Caco-2 (cell line): ENCODE measurements at regions of chr3 and their contacts with region 1.

Region 1: DNA sequence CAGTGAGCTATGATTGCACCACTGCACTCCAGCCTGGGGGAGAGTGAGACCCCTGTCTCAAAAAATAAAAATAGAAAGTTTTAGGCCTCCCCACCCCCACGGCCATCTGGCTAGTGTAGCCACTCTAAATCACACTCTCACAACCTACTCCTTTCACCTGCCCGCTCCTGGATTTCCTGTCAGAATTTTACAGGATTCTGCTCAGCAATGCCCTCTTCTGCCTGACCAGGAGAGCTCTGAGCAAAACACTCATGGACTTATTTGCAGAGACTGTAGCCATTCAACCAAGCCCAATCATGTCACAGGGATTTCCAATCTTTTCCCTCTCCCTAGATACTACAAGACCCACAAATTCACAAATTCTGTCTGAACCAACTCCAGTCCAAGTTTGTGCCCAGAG is 242.6 kb upstream of the TPRG1 start:
- DNase-seq: peak; percentile 50 to 54
- H3K4me3 ChIP-seq: no peak overlapping the region
- H3K4me3 Mint-ChIP-seq: no peak overlapping the region
- H3K27ac Mint-ChIP-seq: peak overlapping the region; percentile 79
- H3K4me1 ChIP-seq: peaks cover 14% of the 10 kb centered on the region; the same call in 1 of the 2 replicates
- H3K4me1 Mint-ChIP-seq: peaks cover 8% of the 10 kb centered on the region
- H3K27me3 ChIP-seq: no peaks in the 10 kb centered on the region
- H3K27me3 Mint-ChIP-seq: no peaks in the 10 kb centered on the region
- CTCF ChIP-seq: peak in 1 of 2 experiments; percentile 37

Region 2: GRCh38 chr3:188673646-188674186 is 255.4 kb before region 1 on chr3:
- CTCF ChIA-PET with region 1: no interaction called
- POLR2A ChIA-PET with region 1: no interaction called
- intact Hi-C with region 1: loop called (anchors 5 kb)
- DNase-seq: peak in 1 of 2 experiments; percentile 56
- H3K4me3 ChIP-seq: no peak overlapping the region
- H3K4me3 Mint-ChIP-seq: no peak overlapping the region
- H3K27ac Mint-ChIP-seq: peak overlapping the region; percentile 44
- H3K4me1 ChIP-seq: peaks cover 36% of the 10 kb centered on the region
- H3K4me1 Mint-ChIP-seq: peaks cover 26% of the 10 kb centered on the region
- H3K27me3 ChIP-seq: no peaks in the 10 kb centered on the region
- H3K27me3 Mint-ChIP-seq: no peaks in the 10 kb centered on the region
- CTCF ChIP-seq: no peak